ENCODE measurements at regions of chr19 and their contacts with region 1.

Region 1: GRCh38 chr19:47243776-47244547 is 12.4 kb upstream of the CCDC9 start:
- H3K4me3 ChIP-seq: peak overlapping the region; percentile 19
- H3K27ac ChIP-seq: peak overlapping the region; percentile 65
- H3K4me1 ChIP-seq: peaks cover 7% of the 10 kb centered on the region
- CTCF ChIP-seq: peak; percentile 99

Region 2: GRCh38 chr19:47035127-47036096 is 208.6 kb before region 1 on chr19:
- CTCF ChIA-PET with region 1: interaction called, 12 read pairs
- POLR2A ChIA-PET with region 1: no interaction called
- H3K4me3 ChIP-seq: peak overlapping the region; percentile 40
- H3K27ac ChIP-seq: peak overlapping the region; percentile 80
- H3K4me1 ChIP-seq: peaks cover 17% of the 10 kb centered on the region
- CTCF ChIP-seq: peak; percentile 97

Region 3: GRCh38 chr19:47112997-47113849 is 130.7 kb before region 1 on chr19 and contains the start of gene ZC3H4:
- CTCF ChIA-PET with region 1: interaction called, 6 read pairs
- POLR2A ChIA-PET with region 1: interaction called, 19 read pairs
- H3K4me3 ChIP-seq: peak within 1 kb of the TSS; percentile 76
- H3K27ac ChIP-seq: peak within 1 kb of the TSS; percentile 100
- H3K4me1 ChIP-seq: peaks cover 29% of the 10 kb centered on the region
- CTCF ChIP-seq: no peak

Region 4: GRCh38 chr19:47152224-47153017 is 91.5 kb before region 1 on chr19:
- CTCF ChIA-PET with region 1: interaction called, 61 read pairs
- POLR2A ChIA-PET with region 1: interaction called, 19 read pairs
- H3K4me3 ChIP-seq: no peak overlapping the region
- H3K27ac ChIP-seq: peak overlapping the region; percentile 12; the same call in 1 of the 2 replicates
- H3K4me1 ChIP-seq: peaks cover 7% of the 10 kb centered on the region
- CTCF ChIP-seq: no peak

Region 5: DNA sequence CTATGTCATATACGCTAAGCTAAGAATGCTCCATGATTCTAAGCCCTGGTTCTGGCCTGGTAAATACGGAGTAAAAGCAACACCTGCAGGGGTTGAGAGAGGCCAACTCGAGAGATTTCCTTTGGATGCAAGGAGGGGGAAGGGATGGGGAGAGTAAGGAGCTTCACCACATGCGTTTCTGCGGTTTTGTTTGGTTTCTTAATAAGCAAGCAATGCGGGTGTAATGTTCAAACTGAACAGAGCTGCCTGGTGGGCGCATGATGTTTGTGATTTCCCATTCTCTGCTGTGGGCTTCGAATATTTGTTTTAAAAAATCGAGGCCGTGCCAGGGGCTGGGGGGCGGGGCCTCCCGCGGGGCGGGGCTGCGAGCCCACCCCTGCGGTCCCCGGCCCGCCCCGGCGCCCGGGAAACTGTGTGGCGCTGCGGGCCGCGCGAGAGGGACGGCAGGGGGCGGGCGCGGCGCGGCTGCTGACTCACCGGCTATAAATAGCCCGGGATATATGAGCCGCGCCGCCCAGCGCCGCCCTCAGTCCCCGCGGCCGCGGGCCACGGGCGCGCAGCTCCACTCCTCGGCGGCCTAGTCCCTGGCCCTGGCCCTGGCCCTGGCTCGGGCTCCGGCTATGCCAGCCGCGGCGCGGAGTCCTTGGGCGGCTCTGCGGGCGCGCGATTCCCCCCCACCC is 18.1 kb before region 1 on chr19:
- CTCF ChIA-PET with region 1: interaction called, 86 read pairs
- POLR2A ChIA-PET with region 1: interaction called, 112 read pairs
- H3K4me3 ChIP-seq: peak overlapping the region; percentile 91
- H3K27ac ChIP-seq: peak overlapping the region; percentile 92
- H3K4me1 ChIP-seq: peaks cover 26% of the 10 kb centered on the region
- CTCF ChIP-seq: no peak

Region 6: DNA sequence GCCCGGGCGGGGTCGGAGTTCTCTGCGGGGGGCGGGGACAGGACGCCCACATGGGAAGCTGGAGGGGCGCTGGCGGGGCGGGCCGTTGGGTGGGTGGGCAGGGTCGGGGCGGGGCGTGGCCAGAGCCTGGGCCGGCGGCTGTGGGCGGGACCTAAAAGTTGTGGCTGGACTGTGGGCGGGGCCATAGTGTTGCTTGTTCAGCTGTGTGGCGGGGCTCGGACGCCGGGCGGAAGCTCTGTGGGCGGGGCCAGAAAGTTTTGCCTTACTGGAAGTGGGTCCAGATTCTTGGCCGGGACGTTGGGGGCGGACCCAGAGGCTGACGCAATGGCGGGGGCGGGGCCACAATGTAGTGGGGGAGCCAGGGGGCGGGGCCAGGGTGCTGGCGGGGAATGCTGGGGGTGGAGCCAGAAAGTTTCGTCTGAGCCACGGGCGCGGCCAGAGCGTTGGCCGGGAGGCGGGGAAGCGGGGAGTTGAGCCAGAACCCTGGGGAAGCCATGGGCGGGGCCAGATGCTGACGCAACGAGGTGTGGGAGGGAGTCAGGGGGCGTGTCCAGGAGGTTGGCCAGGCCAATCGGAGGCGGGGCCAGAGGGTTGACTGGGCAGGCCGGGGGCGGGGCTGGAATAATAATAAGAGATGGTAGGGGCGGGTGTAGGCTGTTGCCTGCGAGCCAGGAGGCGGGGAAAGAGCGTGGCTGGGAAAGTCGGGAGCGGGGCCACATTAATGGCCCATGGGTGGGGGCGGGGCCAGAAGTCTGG is 12.9 kb after region 1 on chr19:
- CTCF ChIA-PET with region 1: interaction called, 44 read pairs
- POLR2A ChIA-PET with region 1: interaction called, 48 read pairs
- H3K4me3 ChIP-seq: peak overlapping the region; percentile 70
- H3K27ac ChIP-seq: peak overlapping the region; percentile 67
- H3K4me1 ChIP-seq: peaks cover 19% of the 10 kb centered on the region
- CTCF ChIP-seq: no peak

Region 7: GRCh38 chr19:47273313-47273977 is 29.5 kb after region 1 on chr19:
- CTCF ChIA-PET with region 1: interaction called, 11 read pairs
- POLR2A ChIA-PET with region 1: interaction called, 10 read pairs
- H3K4me3 ChIP-seq: peak overlapping the region; percentile 58
- H3K27ac ChIP-seq: peak overlapping the region; percentile 97
- H3K4me1 ChIP-seq: peaks cover 11% of the 10 kb centered on the region
- CTCF ChIP-seq: no peak

Region 8: GRCh38 chr19:47471733-47472457 is 227.9 kb after region 1 on chr19 and contains the start of gene SLC8A2:
- CTCF ChIA-PET with region 1: no interaction called
- POLR2A ChIA-PET with region 1: no interaction called
- H3K4me3 ChIP-seq: peak within 1 kb of the TSS; percentile 6; the same call in 1 of the 2 replicates
- H3K27ac ChIP-seq: no peak within 1 kb of the TSS
- H3K4me1 ChIP-seq: no peaks in the 10 kb centered on the region
- CTCF ChIP-seq: no peak